ENCODE measurements at regions of chr7 and their contacts with region 1.

Region 1: GRCh38 chr7:98168181-98168905 is 42.9 kb upstream of the BHLHA15 start:
- DNase-seq: peak; percentile 86
- ATAC-seq: peak; percentile 46
- H3K4me3 ChIP-seq: no peak overlapping the region
- H3K27ac ChIP-seq: no peak overlapping the region
- H3K4me1 ChIP-seq: peaks cover 16% of the 10 kb centered on the region
- H3K27me3 ChIP-seq: no peaks in the 10 kb centered on the region
- CTCF ChIP-seq: peak; percentile 88

Region 2: DNA sequence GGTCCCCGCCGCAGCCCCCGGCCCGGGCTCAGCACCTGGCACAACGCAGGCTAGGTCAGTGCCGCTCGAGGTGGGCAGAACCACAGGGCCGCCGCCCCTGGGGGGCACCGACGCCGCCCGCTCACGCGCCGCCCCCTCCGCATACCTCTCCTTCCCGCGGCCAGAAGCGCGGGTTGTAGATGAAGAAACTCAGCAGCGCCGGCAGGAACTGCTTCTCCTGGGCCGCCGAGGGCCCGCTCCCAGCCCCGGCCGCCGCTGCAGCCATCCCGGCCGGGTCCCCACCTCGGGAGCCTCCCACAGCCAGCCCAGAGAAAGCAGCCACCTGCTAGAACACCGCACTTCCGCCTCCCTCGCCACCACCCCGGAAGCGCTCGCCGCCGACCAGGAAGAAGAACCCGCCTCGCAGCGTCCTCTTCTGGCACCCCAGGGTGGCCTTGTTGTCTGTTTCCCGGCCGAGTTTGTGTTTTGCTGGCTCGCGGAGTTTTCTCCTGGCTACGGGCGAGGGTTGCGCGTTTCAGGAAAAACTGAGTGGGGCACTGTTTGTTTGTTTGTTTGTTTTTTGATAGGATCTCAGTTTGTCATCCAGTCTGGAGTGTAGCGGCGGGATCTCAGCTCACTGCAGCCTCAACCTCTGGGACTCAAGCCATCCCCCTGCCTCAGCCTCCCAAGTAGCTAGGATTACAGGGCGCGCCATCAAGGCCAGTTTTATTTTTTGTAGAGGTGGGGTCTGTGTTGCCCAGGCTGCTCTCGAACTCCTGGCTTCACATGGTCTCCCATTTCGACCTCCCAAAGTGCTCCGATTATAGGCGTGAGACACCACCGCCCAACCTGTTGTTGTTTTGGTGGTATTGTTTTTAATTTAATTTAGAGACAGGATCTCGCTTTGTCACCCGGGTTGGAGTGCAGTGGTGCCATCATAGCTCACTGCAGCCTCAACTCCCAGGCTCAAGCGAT is 196.1 kb before region 1 on chr7:
- CTCF ChIA-PET with region 1: no interaction called
- POLR2A ChIA-PET with region 1: no interaction called
- intact Hi-C with region 1: loop called (anchors 5 kb)
- DNase-seq: peak; percentile 76
- ATAC-seq: peak; percentile 95
- H3K4me3 ChIP-seq: peak overlapping the region; percentile 99
- H3K27ac ChIP-seq: peak overlapping the region; percentile 52
- H3K4me1 ChIP-seq: peaks cover 11% of the 10 kb centered on the region
- H3K27me3 ChIP-seq: no peaks in the 10 kb centered on the region
- CTCF ChIP-seq: peak; percentile 53; the same call in 1 of the 2 replicates

Region 3: GRCh38 chr7:98086281-98086718 is 82.0 kb before region 1 on chr7:
- CTCF ChIA-PET with region 1: no interaction called
- POLR2A ChIA-PET with region 1: no interaction called
- intact Hi-C with region 1: loop called (anchors 1 kb)
- DNase-seq: peak; percentile 97
- ATAC-seq: peak; percentile 88
- H3K4me3 ChIP-seq: no peak overlapping the region; the same call in 1 of the 2 replicates
- H3K27ac ChIP-seq: peak overlapping the region; percentile 98
- H3K4me1 ChIP-seq: peaks cover 23% of the 10 kb centered on the region
- H3K27me3 ChIP-seq: no peaks in the 10 kb centered on the region
- CTCF ChIP-seq: no peak

Region 4: GRCh38 chr7:98119256-98119918 is 49.0 kb before region 1 on chr7:
- CTCF ChIA-PET with region 1: interaction called, 4 read pairs
- POLR2A ChIA-PET with region 1: no interaction called
- intact Hi-C with region 1: loop called (anchors 1 kb)
- DNase-seq: peak; percentile 79
- ATAC-seq: peak; percentile 89
- H3K4me3 ChIP-seq: peak overlapping the region; percentile 48
- H3K27ac ChIP-seq: peak overlapping the region; percentile 67
- H3K4me1 ChIP-seq: peaks cover 38% of the 10 kb centered on the region
- H3K27me3 ChIP-seq: no peaks in the 10 kb centered on the region
- CTCF ChIP-seq: no peak

Measured in PC-3 (cell line).